Right lobe of liver (tissue), 6 donors: ENCODE measurements at regions of chr16 and their contacts with region 1.

Region 1: DNA sequence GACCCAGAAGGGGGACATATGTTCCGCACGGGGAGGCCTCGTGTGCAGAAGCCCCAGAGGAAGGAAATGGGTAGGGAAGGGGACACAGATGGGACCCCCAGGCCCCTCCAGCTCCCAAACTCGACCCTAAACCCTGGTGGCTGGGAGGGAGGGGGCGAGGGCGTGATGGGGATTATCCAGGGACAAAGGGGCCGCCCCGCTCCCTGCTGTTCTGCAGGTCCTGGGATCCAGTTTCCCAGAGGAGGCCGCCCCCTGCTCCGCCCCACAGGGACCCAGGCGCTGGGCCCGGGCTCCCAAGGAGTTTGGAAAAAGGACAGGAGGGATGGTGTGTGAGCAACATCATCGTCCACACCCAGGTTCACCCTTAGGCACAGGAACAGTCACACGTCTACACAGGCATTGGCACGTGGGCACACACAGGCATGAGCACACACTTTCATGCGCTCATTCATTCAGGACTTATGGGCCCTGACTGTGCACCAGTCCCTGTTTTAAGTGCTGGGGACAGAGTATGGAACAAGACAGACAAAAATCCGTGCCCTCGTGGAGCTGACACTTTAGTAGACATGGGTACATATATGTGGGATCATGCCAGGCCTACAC is 12.8 kb upstream of the FBXL19 start:
- DNase-seq: no peak
- ATAC-seq: peak in 1 of 4 donors; percentile 14
- H3K4me3 ChIP-seq: no peak overlapping the region
- H3K27ac ChIP-seq: no peak overlapping the region
- H3K4me1 ChIP-seq: no peaks in the 10 kb centered on the region
- H3K27me3 ChIP-seq: no peaks in the 10 kb centered on the region
- CTCF ChIP-seq: no peak
- POLR2A ChIP-seq: no peak

Region 2: GRCh38 chr16:30844671-30845449 is 65.7 kb before region 1 on chr16:
- intact Hi-C with region 1: loop called in 1 of 2 experiments (anchors 5 kb)
- DNase-seq: peak in 2 of 3 donors; percentile 54 to 81
- ATAC-seq: peak; percentile 93 to 98 (median 96)
- H3K4me3 ChIP-seq: peak overlapping the region; percentile 15 to 33 (median 32)
- H3K27ac ChIP-seq: peak overlapping the region in 2 of 3 donors; percentile 31 to 34
- H3K4me1 ChIP-seq: peaks cover 0 to 10% (median 5%) of the 10 kb centered on the region in 4 donors
- H3K27me3 ChIP-seq: no peaks in the 10 kb centered on the region
- CTCF ChIP-seq: peak; percentile 85 to 91 (median 90)
- POLR2A ChIP-seq: no peak